ENCODE measurements at regions of chr12 and their contacts with region 1.

Region 1: GRCh38 chr12:120767485-120767944 is 41.9 kb downstream of the ACADS start:
- DNase-seq: no peak
- H3K4me3 ChIP-seq: no peak overlapping the region
- H3K27ac ChIP-seq: peak overlapping the region in 7 of 59 donors; percentile 4 to 53 (median 35)
- H3K27me3 ChIP-seq: no peaks in the 10 kb centered on the region
- CTCF ChIP-seq: no peak

Region 2: DNA sequence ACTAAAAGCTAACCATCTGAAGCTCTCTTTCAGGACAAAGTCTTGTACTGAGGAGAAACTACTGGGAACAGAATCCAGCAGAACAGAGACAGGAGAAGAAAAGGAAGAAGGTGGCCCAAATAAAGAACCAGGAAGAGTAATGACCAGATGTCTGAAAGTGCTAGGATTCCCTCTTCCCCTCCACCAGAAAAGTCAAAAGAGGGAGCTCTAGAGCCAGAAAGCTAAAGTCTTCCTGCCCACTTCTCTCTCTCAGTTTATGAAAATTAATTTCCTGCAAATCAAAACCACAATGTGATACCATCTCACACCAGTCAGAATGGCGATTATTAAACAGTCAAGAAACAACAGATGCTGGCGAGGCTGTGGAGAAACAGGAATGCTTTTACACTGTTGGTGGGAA is 89.5 kb after region 1 on chr12:
- intact Hi-C with region 1: loop called in 1 of 2 experiments (anchors 5 kb)
- DNase-seq: no peak
- H3K4me3 ChIP-seq: no peak overlapping the region
- H3K27ac ChIP-seq: peak overlapping the region in 28 of 59 donors; percentile 3 to 69 (median 40)
- H3K27me3 ChIP-seq: no peaks in the 10 kb centered on the region
- CTCF ChIP-seq: peak in 40 of 56 donors; percentile 7 to 67 (median 33)